WTC11 (cell line): ENCODE measurements at regions of chr16 and their contacts with region 1.

Region 1: GRCh38 chr16:8868416-8869211 is at the start of gene CARHSP1:
- DNase-seq: peak; percentile 92
- ATAC-seq: peak; percentile 59
- H3K4me3 Mint-ChIP-seq: peak within 1 kb of the TSS; percentile 89
- H3K27ac Mint-ChIP-seq: peak within 1 kb of the TSS; percentile 99
- H3K4me1 Mint-ChIP-seq: peaks cover 40% of the 10 kb centered on the region
- H3K27me3 Mint-ChIP-seq: no peaks in the 10 kb centered on the region
- CTCF ChIP-seq: no peak
- total RNA-seq, gene CARHSP1: 260 to 271 TPM (median 261 TPM) in 3 replicates

Region 2: GRCh38 chr16:8572919-8573724 is 295.5 kb before region 1 on chr16:
- CTCF ChIA-PET with region 1: no interaction called
- POLR2A ChIA-PET with region 1: no interaction called
- DNase-seq: peak; percentile 55
- ATAC-seq: peak; percentile 49
- H3K4me3 Mint-ChIP-seq: no peak overlapping the region
- H3K27ac Mint-ChIP-seq: no peak overlapping the region; the same call in 1 of the 2 replicates
- H3K4me1 Mint-ChIP-seq: peaks cover 23% of the 10 kb centered on the region
- H3K27me3 Mint-ChIP-seq: no peaks in the 10 kb centered on the region
- CTCF ChIP-seq: peak; percentile 35; the same call in 1 of the 2 replicates

Region 3: DNA sequence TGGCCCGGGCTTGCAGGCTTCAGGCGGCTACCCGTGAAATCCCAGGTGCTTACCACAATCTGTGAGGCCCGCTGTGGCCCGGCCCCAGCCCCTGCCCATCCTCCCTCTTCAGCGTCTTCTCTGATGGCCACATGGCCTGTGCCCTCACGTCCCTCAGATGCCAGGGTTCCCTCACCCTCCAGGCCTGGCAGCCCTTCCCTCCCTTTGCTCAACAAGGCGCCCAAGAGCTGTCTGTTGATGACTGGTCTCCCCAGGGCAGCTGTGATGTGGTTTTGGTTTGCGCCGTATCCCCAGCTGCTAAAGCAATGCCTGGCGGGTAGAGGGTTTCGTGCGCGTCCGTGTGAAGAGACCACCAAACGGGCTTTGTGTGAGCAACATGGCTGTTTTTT is 35.9 kb before region 1 on chr16:
- CTCF ChIA-PET with region 1: interaction called, 4 read pairs
- POLR2A ChIA-PET with region 1: interaction called, 20 read pairs
- DNase-seq: no peak
- ATAC-seq: peak; percentile 12
- H3K4me3 Mint-ChIP-seq: peak overlapping the region; percentile 48
- H3K27ac Mint-ChIP-seq: peak overlapping the region; percentile 100
- H3K4me1 Mint-ChIP-seq: peaks cover 62% of the 10 kb centered on the region
- H3K27me3 Mint-ChIP-seq: no peaks in the 10 kb centered on the region
- CTCF ChIP-seq: no peak

Region 4: DNA sequence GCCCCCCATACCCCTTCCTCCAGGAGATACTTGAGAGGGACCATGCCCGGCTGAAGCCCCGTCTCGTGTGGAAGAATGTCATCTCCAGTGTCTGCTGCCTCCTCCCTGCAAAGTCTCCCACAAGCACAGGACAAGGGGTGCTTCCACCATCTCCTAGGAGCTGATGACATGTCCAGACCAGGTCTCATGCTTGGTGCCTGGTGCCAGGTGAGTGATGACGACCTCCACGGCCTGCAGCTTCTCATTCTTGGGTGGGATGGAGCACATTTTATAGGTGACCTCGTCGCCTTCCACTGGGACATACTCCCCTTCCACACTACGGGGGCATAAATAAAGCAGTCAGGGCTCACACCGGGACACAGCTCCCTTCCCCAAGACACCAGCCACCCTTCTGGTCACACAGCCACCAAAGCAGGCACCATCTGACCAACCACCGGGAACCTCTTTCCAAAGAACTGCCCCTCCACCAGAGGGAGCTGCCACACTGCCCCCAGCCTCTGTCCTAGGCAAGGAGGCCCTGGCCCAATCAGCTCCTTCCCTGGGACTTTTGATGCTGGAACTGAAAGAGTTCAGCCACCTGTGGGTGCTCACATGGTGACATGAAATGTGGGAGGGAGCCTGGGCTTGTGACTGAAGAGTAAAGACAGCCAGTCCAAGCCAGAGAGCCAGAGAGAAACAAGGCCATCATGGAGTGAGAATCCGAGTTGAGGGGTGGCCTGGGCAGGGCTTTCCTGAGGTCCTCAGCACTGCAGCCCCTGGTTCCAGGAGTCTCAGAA is 13.4 kb before region 1 on chr16:
- CTCF ChIA-PET with region 1: interaction called, 11 read pairs
- POLR2A ChIA-PET with region 1: interaction called, 10 read pairs
- DNase-seq: no peak
- ATAC-seq: no peak
- H3K4me3 Mint-ChIP-seq: no peak overlapping the region
- H3K27ac Mint-ChIP-seq: peak overlapping the region; percentile 93
- H3K4me1 Mint-ChIP-seq: peaks cover 53% of the 10 kb centered on the region
- H3K27me3 Mint-ChIP-seq: no peaks in the 10 kb centered on the region
- CTCF ChIP-seq: no peak

Region 5: DNA sequence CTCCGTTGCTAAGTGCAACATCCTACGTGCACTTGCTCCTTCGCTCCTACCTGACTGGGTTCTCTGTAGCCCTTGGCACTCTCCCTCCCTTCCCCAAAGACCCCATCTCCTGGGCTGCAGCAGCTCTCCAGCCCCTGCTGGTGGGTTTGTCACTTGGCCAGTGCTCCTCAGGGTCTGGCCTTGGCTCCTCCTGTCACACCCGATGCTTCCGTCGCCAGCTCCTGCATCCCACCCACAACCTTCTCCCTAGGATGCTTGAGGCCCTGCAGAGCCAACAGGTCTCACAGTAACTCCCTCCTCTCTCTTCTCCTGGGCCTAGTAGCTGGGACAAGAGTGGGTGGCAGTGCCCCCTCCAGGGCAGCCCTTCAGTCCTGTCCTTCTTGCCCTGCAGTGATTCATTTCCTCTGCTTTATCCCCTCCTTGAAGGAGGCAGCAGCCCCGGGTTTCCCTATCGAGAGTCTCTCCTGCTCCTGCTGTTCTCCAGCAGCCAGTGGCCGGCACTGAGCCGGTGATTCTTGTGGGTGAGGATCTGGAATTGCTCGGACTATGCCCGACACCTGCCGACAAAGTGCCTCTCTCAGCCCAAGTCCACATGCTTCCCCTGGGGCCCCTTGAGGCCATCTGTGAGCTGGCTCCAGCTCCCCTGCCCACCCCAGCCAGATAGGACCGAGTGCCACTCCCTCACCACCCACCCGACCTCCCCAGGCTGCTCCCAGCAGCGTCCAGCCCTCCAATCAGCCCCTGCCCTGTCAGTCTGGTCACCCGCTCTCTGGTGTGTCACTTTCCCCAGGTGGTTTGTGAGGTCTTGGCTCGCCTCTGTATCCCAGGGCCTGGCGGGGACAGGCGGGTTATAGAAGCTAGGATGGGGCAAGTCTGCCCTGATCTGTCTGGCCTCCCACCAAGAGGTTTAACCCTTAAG is 17.3 kb after region 1 on chr16:
- CTCF ChIA-PET with region 1: interaction called, 58 read pairs
- POLR2A ChIA-PET with region 1: interaction called, 5 read pairs
- DNase-seq: no peak
- ATAC-seq: peak; percentile 61
- H3K4me3 Mint-ChIP-seq: no peak overlapping the region
- H3K27ac Mint-ChIP-seq: peak overlapping the region; percentile 36
- H3K4me1 Mint-ChIP-seq: peaks cover 15% of the 10 kb centered on the region
- H3K27me3 Mint-ChIP-seq: no peaks in the 10 kb centered on the region; the same call in 1 of the 2 replicates
- CTCF ChIP-seq: no peak